AG04450 (cell line): ENCODE measurements at regions of chr3 and their contacts with region 1.

Region 1: DNA sequence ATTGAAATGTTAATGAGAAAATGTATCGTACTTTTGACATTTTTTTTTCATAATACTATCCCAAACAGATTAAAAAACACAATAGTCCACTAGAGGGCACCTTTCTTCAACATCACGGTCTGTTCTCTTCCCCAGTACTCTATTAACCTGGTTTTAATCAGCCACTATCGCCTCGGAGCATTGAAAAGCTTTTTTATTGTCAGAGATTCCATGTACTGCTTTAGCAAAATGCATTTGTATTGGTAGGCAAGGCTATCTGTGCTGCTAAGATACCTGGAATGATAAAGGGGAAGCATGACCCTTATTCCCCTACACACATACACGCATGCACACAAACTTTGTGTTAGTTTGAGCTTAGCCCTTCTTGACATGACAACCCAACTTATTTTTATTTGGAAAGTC is 160.1 kb upstream of the IL12A start:
- DNase-seq: no peak
- H3K4me3 ChIP-seq: no peak overlapping the region
- H3K27ac ChIP-seq: no peak overlapping the region
- H3K27me3 ChIP-seq: no peaks in the 10 kb centered on the region
- CTCF ChIP-seq: peak; percentile 56

Region 2: GRCh38 chr3:159219231-159219630 is 609.3 kb before region 1 on chr3:
- CTCF ChIA-PET with region 1: no interaction called
- POLR2A ChIA-PET with region 1: no interaction called
- DNase-seq: no peak
- H3K4me3 ChIP-seq: no peak overlapping the region
- H3K27ac ChIP-seq: no peak overlapping the region
- H3K27me3 ChIP-seq: no peaks in the 10 kb centered on the region
- CTCF ChIP-seq: no peak

Region 3: DNA sequence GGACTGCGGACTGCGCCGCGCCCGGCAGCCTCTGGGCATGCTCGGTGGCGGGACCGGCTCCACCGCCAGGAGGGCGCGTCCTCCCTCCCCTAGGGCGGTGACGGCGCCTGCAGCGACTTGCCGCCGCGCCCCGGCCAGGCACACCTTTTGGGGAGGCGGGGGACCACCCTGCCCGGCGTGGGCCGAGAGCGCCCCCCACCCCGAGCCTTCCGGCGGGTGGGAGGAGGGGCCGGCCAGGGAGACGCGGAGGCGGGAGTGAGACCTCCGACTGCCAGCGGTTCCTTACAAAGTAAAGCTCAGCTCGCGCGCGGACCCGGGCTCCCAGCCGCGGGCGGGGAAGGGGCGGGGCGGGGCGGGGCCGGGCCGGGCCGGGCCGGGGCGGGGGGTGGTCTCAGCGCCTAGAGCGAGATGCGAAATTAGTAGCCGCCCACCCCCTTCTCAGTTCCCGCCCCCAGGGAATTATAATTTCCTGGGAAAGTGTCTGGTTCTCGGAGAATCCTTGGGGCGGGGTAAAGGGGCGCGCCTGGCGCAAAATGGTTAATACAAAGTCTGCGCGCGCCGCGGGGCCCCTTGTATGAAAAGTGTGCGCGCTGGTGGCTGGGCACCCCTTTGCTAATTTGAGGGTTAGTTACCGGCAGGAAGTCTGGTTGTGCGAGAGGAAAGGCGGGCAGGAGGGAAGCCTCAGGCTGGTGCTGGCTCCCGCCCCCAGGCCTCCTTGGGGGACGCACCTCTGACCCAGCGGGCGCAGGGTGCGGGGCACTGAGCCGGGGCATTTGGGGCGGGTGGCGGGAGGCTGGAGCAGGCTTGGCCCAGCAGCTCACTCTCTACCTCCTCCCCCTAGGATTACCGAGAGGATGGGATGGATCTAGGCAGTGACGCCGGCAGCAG is 64.7 kb before region 1 on chr3:
- CTCF ChIA-PET with region 1: interaction called, 11 read pairs
- POLR2A ChIA-PET with region 1: no interaction called
- DNase-seq: peak; percentile 54
- H3K4me3 ChIP-seq: peak overlapping the region; percentile 75
- H3K27ac ChIP-seq: peak overlapping the region; percentile 95
- H3K27me3 ChIP-seq: no peaks in the 10 kb centered on the region
- CTCF ChIP-seq: peak; percentile 25

Region 4: DNA sequence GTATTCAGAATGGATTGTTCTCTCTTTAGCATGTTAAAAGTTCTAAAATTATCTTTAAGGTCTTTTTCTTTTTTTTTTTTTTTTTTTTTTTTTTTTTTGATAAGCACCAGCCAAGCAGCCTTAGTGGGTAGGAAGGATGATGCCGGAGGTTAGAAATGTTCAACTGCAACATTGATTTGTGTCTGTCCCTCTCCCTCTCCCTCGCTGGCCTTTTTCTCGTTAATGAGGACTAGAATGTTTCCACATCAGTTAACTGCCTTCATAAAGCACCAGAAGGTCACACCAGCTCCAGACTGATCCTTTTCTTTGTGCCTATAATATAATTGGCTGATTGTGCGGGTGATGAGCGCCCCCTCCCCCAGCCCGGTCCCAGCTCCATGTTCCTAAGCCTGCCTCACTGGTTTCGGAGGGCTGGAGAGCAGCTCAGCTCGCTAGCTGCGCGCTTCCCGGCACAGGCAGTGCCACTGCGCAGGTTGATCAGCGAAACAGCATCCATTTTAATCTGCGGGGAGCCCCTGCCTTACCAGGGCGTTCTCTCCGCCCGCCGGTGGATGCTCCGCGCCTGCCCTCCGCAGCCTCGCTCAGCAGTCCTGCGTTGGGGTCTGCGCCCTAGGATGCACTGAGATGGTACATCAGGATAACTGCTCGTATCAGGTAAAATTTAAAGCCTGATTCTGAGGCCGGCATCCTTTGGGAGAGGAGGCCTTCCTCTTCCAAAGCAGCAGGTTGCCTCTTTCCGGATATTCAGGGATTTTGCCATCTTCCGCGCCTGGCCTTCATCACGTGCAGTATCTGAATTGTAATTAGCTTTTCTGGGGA is 11.2 kb after region 1 on chr3:
- CTCF ChIA-PET with region 1: interaction called, 26 read pairs
- POLR2A ChIA-PET with region 1: no interaction called
- DNase-seq: no peak
- H3K4me3 ChIP-seq: no peak within 1 kb of the TSS
- H3K27ac ChIP-seq: no peak within 1 kb of the TSS
- H3K27me3 ChIP-seq: no peaks in the 10 kb centered on the region
- CTCF ChIP-seq: no peak

Region 5: DNA sequence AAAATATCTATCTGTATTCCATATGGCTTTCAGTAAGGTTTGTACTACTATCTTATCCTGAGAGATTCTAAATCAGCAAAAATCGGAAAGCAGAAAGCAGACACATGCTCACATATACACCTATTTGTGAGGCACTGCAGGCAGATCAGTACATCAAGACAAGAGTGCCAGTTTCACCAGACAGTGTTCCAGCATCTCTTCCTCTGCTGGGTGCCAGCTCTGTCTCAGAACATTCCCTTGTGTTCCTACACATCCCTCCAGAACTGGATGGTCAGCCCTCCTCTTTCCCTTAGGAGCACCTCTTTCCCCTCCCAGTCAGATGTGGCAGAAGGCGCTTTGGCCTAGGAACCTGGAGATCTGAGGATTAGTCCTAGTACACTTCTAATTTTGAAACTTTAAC is 38.8 kb after region 1 on chr3:
- CTCF ChIA-PET with region 1: interaction called, 15 read pairs
- POLR2A ChIA-PET with region 1: interaction called, 3 read pairs
- DNase-seq: no peak
- H3K4me3 ChIP-seq: no peak overlapping the region
- H3K27ac ChIP-seq: no peak overlapping the region
- H3K27me3 ChIP-seq: no peaks in the 10 kb centered on the region
- CTCF ChIP-seq: no peak

Region 6: DNA sequence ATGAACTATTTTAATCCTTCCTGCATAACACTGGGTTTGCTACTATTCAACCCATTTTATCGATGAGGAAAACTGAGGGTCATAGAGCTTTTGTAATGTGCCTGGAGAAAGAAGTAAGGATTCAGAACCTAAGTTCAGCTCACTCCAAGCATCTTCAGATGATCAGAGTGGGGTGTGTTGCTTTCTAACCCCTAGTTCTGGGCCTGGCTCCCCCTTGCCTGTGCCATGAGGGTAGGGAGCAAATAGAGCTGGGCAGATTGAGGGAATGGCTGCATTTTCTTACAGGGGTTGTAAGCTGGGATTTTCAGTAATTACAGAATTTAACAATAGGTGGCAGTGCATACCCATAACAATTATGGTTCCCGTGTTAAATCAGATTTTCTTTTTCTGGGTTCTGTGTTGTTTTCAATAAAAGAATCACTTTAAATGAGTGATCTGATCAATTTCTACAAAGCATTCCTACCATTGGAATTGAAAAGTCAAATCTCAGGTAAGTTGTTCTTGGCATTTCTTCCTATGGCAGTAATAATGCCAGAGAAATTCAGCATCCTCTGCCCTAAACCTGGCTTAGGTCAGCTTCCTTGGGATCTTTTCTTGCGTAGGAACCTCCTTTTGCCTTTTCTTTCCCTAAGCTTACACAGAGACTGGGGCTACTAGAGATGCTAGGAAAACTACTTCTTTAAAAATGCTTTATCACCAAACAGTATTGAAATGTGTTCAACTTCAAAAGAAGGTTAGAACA is 56.3 kb after region 1 on chr3:
- CTCF ChIA-PET with region 1: interaction called, 78 read pairs
- POLR2A ChIA-PET with region 1: interaction called, 3 read pairs
- DNase-seq: no peak
- H3K4me3 ChIP-seq: no peak overlapping the region
- H3K27ac ChIP-seq: no peak overlapping the region
- H3K27me3 ChIP-seq: no peaks in the 10 kb centered on the region
- CTCF ChIP-seq: peak; percentile 58

Region 7: GRCh38 chr3:160106905-160107861 is 278.6 kb after region 1 on chr3:
- CTCF ChIA-PET with region 1: no interaction called
- POLR2A ChIA-PET with region 1: no interaction called
- DNase-seq: no peak
- H3K4me3 ChIP-seq: no peak overlapping the region
- H3K27ac ChIP-seq: no peak overlapping the region
- H3K27me3 ChIP-seq: peaks cover 4% of the 10 kb centered on the region
- CTCF ChIP-seq: no peak